Activated naive CD4-positive, alpha-beta T cell treated with anti-CD3 and anti-CD28 coated beads, Interleukin-2, amount 10 ng/mL, durations not matched to agents 7 days and 5 days (primary cell): ENCODE measurements at regions of chr4 and their contacts with region 1.

Region 1: DNA sequence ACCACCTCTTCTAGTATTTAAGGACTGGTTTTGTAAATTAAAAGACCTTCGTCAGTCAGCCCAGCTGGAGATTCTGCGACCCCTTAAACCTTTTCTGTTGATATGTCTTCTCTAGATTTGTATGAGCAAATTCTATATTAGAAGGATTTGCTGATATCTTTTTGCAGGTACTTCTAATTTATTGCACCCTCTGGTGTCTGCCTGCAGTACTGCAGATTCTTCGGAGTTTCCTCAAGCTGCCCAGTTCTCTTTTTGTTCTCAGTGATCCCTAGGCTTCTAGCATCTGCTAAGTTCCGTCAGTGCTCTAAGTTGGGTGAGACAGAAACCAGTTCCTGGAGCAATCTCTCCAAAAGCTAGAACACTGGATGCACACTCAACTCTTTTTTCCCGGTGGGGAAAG is 545.2 kb downstream of the C4orf33 start:
- DNase-seq: peak; percentile 56
- H3K4me3 Mint-ChIP-seq: no peak overlapping the region
- H3K27ac Mint-ChIP-seq: no peak overlapping the region
- H3K4me1 Mint-ChIP-seq: no peaks in the 10 kb centered on the region
- H3K27me3 Mint-ChIP-seq: no peaks in the 10 kb centered on the region

Region 2: DNA sequence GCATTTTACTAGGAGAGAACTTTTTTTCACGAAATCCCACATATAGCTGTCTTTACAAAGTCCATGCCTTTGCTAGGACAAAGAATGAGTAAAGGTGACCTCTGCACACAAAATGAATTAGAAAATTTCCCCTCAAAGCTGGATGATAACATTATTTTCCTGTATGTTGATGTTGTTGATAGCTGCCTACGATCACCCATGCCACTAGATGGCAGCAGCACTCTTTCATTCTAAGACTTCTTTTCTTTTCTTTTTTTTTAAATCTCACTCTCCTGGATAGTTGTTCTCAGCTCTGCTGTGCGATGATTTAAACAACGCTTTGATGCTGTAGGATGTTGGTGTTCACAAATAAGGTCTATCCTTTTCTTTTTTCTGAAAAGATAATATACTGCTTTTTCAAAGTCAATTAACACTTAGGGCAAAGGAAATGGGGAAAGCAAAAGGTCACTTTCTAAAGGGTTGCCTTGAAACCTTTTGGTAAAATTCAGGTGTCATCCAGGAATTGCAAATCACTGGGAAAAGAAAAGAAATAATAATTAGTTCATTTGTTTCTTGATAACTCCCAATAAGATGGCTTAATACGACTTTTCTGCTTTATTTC is 278.4 kb before region 1 on chr4:
- CTCF ChIA-PET with region 1: interaction called, 34 read pairs
- DNase-seq: peak; percentile 55
- H3K4me3 Mint-ChIP-seq: no peak overlapping the region
- H3K27ac Mint-ChIP-seq: no peak overlapping the region
- H3K4me1 Mint-ChIP-seq: no peaks in the 10 kb centered on the region
- H3K27me3 Mint-ChIP-seq: no peaks in the 10 kb centered on the region

Region 3: DNA sequence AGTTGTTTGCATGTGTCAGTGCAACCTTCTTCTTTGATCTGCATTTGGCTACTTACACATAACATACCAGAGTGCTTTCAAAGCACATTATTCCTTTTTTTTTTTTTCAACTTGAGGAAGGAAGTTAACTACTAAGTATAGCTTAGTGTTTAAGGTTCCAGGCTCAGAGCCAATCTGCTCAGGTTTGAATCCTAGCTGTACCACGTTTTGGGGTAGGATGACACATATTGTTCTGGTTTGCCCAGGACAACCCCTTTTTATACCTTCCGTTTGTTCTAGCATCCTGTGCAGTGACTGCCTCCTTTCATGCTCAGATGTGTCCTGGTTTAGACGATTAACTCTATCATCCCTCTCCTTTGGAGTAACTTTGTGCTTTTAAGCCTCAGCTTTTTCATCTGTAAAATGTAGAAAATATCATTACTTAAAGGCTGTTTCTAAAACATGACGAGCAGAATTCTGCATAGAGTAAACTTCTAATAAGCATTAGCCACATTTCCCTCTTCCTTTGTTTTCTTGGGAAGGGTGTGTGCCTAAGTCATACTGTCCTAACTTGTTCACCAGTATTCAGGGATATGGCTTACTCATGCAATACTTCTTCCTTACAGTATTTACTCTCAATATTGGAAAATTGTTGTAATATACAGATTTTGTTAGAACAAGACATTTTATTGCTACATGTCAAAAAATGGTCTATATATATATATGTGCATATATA is 263.9 kb before region 1 on chr4:
- CTCF ChIA-PET with region 1: no interaction called
- DNase-seq: no peak
- H3K4me3 Mint-ChIP-seq: no peak overlapping the region
- H3K27ac Mint-ChIP-seq: no peak overlapping the region
- H3K4me1 Mint-ChIP-seq: no peaks in the 10 kb centered on the region
- H3K27me3 Mint-ChIP-seq: peaks cover 4% of the 10 kb centered on the region